Activated CD4-positive, alpha-beta T cell treated with anti-CD3 and anti-CD28 coated beads for 36 hours (primary cell): ENCODE measurements at regions of chr20 and their contacts with region 1.

Region 1: DNA sequence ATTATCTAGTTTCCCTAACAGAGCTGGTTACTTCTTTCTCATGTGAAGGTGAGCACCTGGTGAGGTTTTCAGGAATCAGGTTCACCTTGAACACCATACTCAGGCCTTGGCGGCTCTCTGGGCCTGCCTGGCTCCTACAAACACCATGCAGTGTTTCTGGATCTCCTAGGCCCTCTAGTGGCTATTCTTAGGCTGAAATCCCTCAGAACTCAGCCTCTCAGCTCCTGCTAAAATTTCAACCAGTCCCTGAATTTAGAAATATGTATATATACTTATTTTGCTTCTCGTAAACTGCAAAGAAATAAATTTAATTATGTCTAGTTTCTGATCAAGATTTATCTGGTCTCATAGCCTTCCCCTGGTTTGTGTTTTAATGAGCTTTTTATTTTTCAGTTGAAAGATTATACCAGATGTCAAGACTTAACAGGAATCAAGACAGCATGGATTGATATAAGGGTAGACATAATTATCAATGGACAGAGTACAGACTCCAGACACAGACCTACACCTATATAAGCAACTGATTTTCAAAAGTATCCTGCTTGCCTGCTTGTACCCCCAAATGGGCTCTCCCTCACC is 55.9 kb downstream of the ANKEF1 start:
- DNase-seq: peak; percentile 37
- ATAC-seq: peak; percentile 63
- H3K4me3 Mint-ChIP-seq: no peak overlapping the region
- H3K27ac Mint-ChIP-seq: no peak overlapping the region
- H3K4me1 Mint-ChIP-seq: no peaks in the 10 kb centered on the region
- H3K27me3 Mint-ChIP-seq: peaks cover 3% of the 10 kb centered on the region

Region 2: DNA sequence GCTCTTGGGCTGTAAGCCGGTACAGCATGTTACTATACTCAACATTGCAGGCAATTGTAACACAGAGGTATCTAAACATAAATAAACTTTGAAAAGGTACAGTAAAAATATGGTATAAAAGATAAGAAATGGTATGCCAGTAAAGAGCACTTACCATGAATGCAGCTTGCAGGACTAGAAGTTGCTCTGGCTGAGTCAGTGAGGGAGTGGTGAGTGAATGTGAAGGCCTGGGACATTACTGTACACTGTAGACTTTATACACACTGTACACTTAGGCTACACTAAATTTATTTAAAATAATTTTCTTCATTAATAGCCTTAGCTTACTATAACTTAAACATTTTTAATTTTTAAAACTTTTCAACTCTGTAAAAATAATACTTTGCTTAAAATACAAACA is 93.7 kb before region 1 on chr20:
- CTCF ChIA-PET with region 1: no interaction called
- POLR2A ChIA-PET with region 1: no interaction called
- intact Hi-C with region 1: no loop called
- DNase-seq: no peak
- ATAC-seq: no peak
- H3K4me3 Mint-ChIP-seq: no peak overlapping the region
- H3K27ac Mint-ChIP-seq: no peak overlapping the region
- H3K4me1 Mint-ChIP-seq: no peaks in the 10 kb centered on the region
- H3K27me3 Mint-ChIP-seq: no peaks in the 10 kb centered on the region

Region 3: DNA sequence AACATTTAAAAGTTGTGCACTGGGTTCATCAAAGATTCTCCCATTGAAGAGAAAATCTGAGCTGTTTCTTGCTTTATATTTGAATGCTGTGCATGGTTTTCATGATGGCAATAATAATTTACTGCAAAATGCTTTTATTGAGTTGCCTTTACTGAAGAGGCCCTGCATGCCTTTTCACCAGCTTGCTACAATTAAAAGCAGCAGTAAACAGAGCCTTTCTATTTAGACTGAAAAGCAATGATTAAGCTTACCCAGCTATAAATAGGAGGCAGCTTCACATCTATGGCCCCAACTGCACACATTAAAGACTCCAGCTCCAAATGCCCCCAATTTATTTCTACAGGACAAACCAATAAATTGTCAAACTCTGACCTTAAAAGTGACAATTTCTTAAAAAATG is 14.4 kb after region 1 on chr20:
- CTCF ChIA-PET with region 1: interaction called, 13 read pairs
- POLR2A ChIA-PET with region 1: no interaction called
- intact Hi-C with region 1: no loop called
- DNase-seq: no peak
- ATAC-seq: no peak
- H3K4me3 Mint-ChIP-seq: no peak overlapping the region
- H3K27ac Mint-ChIP-seq: no peak overlapping the region
- H3K4me1 Mint-ChIP-seq: no peaks in the 10 kb centered on the region
- H3K27me3 Mint-ChIP-seq: no peaks in the 10 kb centered on the region

Region 4: GRCh38 chr20:10171864-10172751 is 81.4 kb after region 1 on chr20:
- CTCF ChIA-PET with region 1: no interaction called
- POLR2A ChIA-PET with region 1: no interaction called
- intact Hi-C with region 1: no loop called
- DNase-seq: peak; percentile 75
- ATAC-seq: peak; percentile 91
- H3K4me3 Mint-ChIP-seq: peak overlapping the region; percentile 46
- H3K27ac Mint-ChIP-seq: no peak overlapping the region
- H3K4me1 Mint-ChIP-seq: peaks cover 4% of the 10 kb centered on the region
- H3K27me3 Mint-ChIP-seq: peaks cover 25% of the 10 kb centered on the region